Tibial artery (tissue), 4 donors: ENCODE measurements at regions of chr19 and their contacts with region 1.

Region 1: GRCh38 chr19:41353466-41354342 is at the start of gene TGFB1:
- DNase-seq: peak; percentile 90 to 95
- H3K4me3 ChIP-seq: peak within 1 kb of the TSS; percentile 83 to 96
- H3K27ac ChIP-seq: peak within 1 kb of the TSS; percentile 89
- H3K4me1 ChIP-seq: peaks cover 0 to 35% (median 16%) of the 10 kb centered on the region in 4 donors
- H3K27me3 ChIP-seq: no peaks in the 10 kb centered on the region
- CTCF ChIP-seq: peak; percentile 87 to 88

Region 2: DNA sequence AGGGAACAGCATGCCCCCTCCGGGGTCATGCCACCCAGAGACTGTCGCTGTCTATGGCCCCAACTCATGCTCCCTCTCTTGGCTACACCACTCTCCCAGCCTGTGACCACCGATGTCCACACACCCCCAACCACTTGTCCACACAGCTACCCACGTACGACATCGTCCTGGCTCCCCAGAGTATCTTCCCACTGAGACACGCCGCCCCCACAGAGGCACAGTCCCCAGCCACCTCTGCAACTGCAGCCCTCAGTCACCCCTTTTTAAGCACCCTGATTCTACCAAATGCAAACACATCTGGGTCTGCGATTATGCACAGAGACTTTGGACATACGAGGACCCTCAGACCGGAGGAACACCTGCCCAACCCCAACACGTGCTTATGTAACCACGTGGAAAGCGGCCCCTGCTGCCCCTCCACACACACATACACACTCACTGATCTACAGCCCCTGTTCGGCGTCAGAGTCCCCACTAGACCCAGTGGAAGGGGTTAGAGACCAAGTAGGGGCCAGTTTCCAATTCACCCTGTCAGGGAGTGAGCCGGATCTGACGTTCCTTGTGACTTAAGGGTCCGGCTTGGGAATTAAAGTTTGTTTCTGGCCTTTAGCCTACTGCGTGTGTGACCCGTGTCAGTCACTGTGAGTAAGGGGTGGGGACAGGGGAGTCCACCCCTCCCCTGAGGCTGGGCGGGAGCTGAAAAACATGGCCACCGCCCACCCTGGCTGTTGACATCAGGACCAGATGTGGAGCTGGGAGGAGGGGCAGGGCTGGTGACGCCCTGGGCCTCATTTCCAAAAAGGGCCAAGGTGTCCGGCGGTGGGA is 146.6 kb before region 1 on chr19:
- intact Hi-C with region 1: loop called (anchors 5 kb)
- DNase-seq: peak; percentile 93 to 97
- H3K4me3 ChIP-seq: peak overlapping the region; percentile 24 to 35
- H3K27ac ChIP-seq: peak overlapping the region; percentile 67 to 73
- H3K4me1 ChIP-seq: peaks cover 0 to 20% (median 11%) of the 10 kb centered on the region in 4 donors
- H3K27me3 ChIP-seq: no peaks in the 10 kb centered on the region
- CTCF ChIP-seq: no peak

Region 3: DNA sequence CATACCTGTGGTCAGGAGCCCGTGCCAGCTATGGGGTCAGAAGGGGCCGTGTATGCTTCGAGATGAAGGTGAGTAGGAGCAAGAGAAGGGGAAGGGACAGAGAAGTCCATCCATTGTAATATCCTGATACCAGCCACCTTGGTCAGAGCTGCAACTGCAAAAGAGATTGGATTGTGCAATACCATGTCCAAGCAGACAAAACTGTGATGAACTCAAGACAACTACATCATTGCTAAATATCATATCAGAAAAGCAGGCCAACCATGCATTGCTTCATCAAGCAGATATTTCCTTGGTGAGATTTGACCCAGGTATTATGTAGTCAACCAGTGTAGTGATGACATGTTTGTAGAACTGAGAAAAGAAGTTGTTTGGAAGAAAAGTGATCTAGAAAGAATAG is 77.5 kb before region 1 on chr19:
- intact Hi-C with region 1: no loop called
- DNase-seq: peak in 1 of 2 donors; percentile 17
- H3K4me3 ChIP-seq: no peak overlapping the region
- H3K27ac ChIP-seq: no peak overlapping the region
- H3K4me1 ChIP-seq: no peaks in the 10 kb centered on the region
- H3K27me3 ChIP-seq: no peaks in the 10 kb centered on the region
- CTCF ChIP-seq: no peak

Region 4: GRCh38 chr19:41310033-41310758 is 43.5 kb before region 1 on chr19 and contains the start of gene CCDC97:
- intact Hi-C with region 1: loop called (anchors 5 kb)
- DNase-seq: peak; percentile 77 to 92
- H3K4me3 ChIP-seq: peak within 1 kb of the TSS; percentile 69 to 70
- H3K27ac ChIP-seq: peak within 1 kb of the TSS; percentile 88 to 91
- H3K4me1 ChIP-seq: peaks cover 4 to 40% (median 32%) of the 10 kb centered on the region in 4 donors
- H3K27me3 ChIP-seq: no peaks in the 10 kb centered on the region
- CTCF ChIP-seq: peak in 1 of 2 experiments; percentile 15

Region 5: DNA sequence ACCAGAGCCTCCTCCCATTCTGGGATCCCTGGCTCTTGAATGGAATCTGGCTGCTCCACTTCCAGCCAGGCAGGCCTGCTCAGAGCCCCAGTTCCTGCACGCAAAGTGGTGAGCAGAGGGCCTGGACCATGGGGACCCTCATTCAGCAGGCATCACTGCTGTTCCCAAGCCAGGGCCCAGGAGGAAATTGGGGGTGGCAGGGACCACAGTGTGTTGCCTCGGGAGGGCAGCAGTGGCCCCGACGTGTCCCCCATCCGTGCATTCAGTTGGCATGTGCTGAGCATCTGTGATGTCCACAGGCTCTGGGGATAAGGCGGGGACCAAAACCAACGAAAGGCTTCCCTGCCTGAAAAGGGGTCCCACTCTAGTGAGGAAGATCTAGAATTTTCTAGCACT is 32.5 kb before region 1 on chr19:
- intact Hi-C with region 1: no loop called
- DNase-seq: no peak
- H3K4me3 ChIP-seq: no peak overlapping the region
- H3K27ac ChIP-seq: peak overlapping the region in 1 of 2 donors; percentile 93
- H3K4me1 ChIP-seq: peaks cover 0 to 49% (median 44%) of the 10 kb centered on the region in 4 donors
- H3K27me3 ChIP-seq: no peaks in the 10 kb centered on the region
- CTCF ChIP-seq: no peak

Region 6: DNA sequence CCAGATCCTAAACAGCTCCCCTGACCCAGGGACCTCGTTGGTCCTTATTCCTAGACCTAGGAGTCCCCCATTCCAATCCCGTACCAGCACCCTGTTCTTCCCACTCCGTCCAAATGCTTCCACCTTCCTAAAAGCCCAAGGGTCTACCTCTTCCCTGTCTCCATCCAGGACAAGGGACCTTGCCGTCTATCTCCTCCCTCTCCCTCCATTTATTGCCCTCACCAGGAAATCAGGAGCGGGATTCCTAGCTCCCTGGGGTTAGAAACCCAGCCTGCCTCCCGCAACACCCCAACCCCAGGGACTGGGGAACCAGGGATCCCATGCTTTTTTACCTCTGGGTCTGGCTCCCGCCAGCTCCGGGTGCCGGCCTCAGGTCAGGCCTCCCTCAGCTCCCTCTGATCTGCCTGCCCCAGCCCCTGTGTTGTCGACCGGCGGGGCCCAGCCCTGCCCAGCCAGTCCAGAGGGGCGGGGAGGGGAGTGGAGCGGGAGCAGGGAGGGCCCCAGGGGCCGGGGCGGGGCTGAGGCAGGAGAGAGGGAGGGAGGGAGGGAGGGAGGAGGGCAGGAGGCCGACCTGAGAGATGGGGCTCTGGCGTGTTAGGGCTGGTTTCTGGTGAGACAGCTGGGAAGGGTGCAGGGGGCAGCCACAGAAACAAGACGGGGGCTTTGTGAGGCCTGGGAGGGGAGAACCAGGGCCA is 73.4 kb after region 1 on chr19 and contains the start of gene B3GNT8:
- intact Hi-C with region 1: no loop called
- DNase-seq: peak; percentile 89 to 92
- H3K4me3 ChIP-seq: peak within 1 kb of the TSS; percentile 49 to 63
- H3K27ac ChIP-seq: peak within 1 kb of the TSS; percentile 78
- H3K4me1 ChIP-seq: peaks cover 0 to 28% (median 25%) of the 10 kb centered on the region in 4 donors
- H3K27me3 ChIP-seq: no peaks in the 10 kb centered on the region
- CTCF ChIP-seq: no peak